WTC11 (cell line): ENCODE measurements at regions of chr1 and their contacts with region 1.

Region 1: GRCh38 chr1:98651188-98651587 is 10.3 kb upstream of the SNX7 start:
- DNase-seq: peak; percentile 63
- ATAC-seq: peak; percentile 93
- H3K4me3 Mint-ChIP-seq: no peak overlapping the region
- H3K27ac Mint-ChIP-seq: no peak overlapping the region
- H3K4me1 Mint-ChIP-seq: no peaks in the 10 kb centered on the region
- H3K27me3 Mint-ChIP-seq: no peaks in the 10 kb centered on the region
- CTCF ChIP-seq: no peak

Region 2: GRCh38 chr1:98468111-98468717 is 183.0 kb before region 1 on chr1:
- CTCF ChIA-PET with region 1: no interaction called
- POLR2A ChIA-PET with region 1: interaction called, 10 read pairs
- DNase-seq: no peak
- ATAC-seq: no peak
- H3K4me3 Mint-ChIP-seq: no peak overlapping the region
- H3K27ac Mint-ChIP-seq: no peak overlapping the region
- H3K4me1 Mint-ChIP-seq: peaks cover 13% of the 10 kb centered on the region
- H3K27me3 Mint-ChIP-seq: no peaks in the 10 kb centered on the region
- CTCF ChIP-seq: no peak

Region 3: GRCh38 chr1:98723574-98723973 is 72.4 kb after region 1 on chr1:
- CTCF ChIA-PET with region 1: no interaction called
- POLR2A ChIA-PET with region 1: no interaction called
- DNase-seq: no peak
- ATAC-seq: no peak
- H3K4me3 Mint-ChIP-seq: no peak overlapping the region
- H3K27ac Mint-ChIP-seq: no peak overlapping the region
- H3K4me1 Mint-ChIP-seq: peaks cover 12% of the 10 kb centered on the region
- H3K27me3 Mint-ChIP-seq: no peaks in the 10 kb centered on the region
- CTCF ChIP-seq: no peak